Activated CD4-positive, alpha-beta memory T cell treated with anti-CD3 and anti-CD28 coated beads, Interleukin-2, amount 10 ng/mL, durations not matched to agents 7 days and 5 days (primary cell): ENCODE measurements at regions of chr7 and their contacts with region 1.

Region 1: GRCh38 chr7:141551094-141551781 is at the start of gene AGK:
- DNase-seq: peak; percentile 82
- H3K4me3 Mint-ChIP-seq: peak within 1 kb of the TSS; percentile 90
- H3K27ac Mint-ChIP-seq: peak within 1 kb of the TSS; percentile 75
- H3K4me1 Mint-ChIP-seq: peaks cover 36% of the 10 kb centered on the region
- H3K27me3 Mint-ChIP-seq: no peaks in the 10 kb centered on the region
- total RNA-seq, gene AGK: 46.9 to 50.4 TPM

Region 2: GRCh38 chr7:141533149-141533949 is 17.9 kb before region 1 on chr7:
- CTCF ChIA-PET with region 1: interaction called, 12 read pairs
- POLR2A ChIA-PET with region 1: no interaction called
- DNase-seq: peak; percentile 64
- H3K4me3 Mint-ChIP-seq: no peak overlapping the region
- H3K27ac Mint-ChIP-seq: no peak overlapping the region
- H3K4me1 Mint-ChIP-seq: no peaks in the 10 kb centered on the region
- H3K27me3 Mint-ChIP-seq: peaks cover 30% of the 10 kb centered on the region

Region 3: GRCh38 chr7:141600168-141601006 is 49.1 kb after region 1 on chr7:
- CTCF ChIA-PET with region 1: no interaction called
- POLR2A ChIA-PET with region 1: no interaction called
- DNase-seq: no peak
- H3K4me3 Mint-ChIP-seq: no peak overlapping the region
- H3K27ac Mint-ChIP-seq: no peak overlapping the region
- H3K4me1 Mint-ChIP-seq: no peaks in the 10 kb centered on the region
- H3K27me3 Mint-ChIP-seq: no peaks in the 10 kb centered on the region